ENCODE measurements at regions of chr21 and their contacts with region 1.

Region 1: GRCh38 chr21:31088315-31088714 is 50.0 kb upstream of the KRTAP19-8 start:
- DNase-seq: peak in 1 of 14 experiments; percentile 27
- ATAC-seq: no peak
- H3K4me3 ChIP-seq: no peak overlapping the region
- H3K4me3 Mint-ChIP-seq: no peak overlapping the region
- H3K27ac ChIP-seq: no peak overlapping the region
- H3K27ac Mint-ChIP-seq: no peak overlapping the region
- H3K4me1 ChIP-seq: peaks cover 7% of the 10 kb centered on the region
- H3K4me1 Mint-ChIP-seq: peaks cover 12% of the 10 kb centered on the region
- H3K27me3 ChIP-seq: no peaks in the 10 kb centered on the region
- H3K27me3 Mint-ChIP-seq: no peaks in the 10 kb centered on the region
- CTCF ChIP-seq: no peak

Region 2: DNA sequence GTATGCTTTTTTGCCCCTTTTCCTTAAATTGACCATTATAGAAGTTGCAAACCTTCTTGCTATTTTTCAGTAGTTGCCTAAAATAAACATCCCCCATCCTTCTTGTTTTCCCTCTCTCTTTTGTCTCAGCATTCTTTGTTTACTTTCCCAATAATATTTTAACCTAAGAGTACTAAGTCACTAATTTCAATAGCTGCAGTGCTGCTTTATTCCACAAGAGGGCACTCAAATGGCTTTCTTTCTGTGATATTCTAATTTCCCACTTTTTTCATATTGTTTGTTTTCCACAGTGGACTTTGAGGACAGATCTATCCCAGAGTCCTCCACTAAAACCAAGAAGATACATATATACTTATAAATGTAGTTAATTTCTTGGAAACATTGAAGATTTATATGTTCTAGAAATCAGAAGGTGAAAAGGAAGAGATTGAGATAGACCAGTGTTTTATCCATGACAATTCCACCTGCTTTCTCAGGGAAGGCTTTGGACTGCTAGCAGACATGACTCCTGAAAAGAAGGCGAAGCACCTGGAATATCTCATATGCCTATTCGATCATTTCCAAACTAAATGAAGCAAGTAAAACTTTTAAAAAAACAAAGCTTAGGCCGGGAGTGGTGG is 1043.8 kb before region 1 on chr21:
- CTCF ChIA-PET with region 1: interaction called, 4 read pairs
- POLR2A ChIA-PET with region 1: no interaction called
- intact Hi-C with region 1: loop called in 1 of 2 experiments (anchors 2 kb)
- DNase-seq: peak in 3 of 14 experiments; percentile 5 to 24 (median 7)
- ATAC-seq: no peak
- H3K4me3 ChIP-seq: no peak overlapping the region
- H3K4me3 Mint-ChIP-seq: no peak overlapping the region
- H3K27ac ChIP-seq: no peak overlapping the region
- H3K27ac Mint-ChIP-seq: no peak overlapping the region
- H3K4me1 ChIP-seq: no peaks in the 10 kb centered on the region
- H3K4me1 Mint-ChIP-seq: no peaks in the 10 kb centered on the region
- H3K27me3 ChIP-seq: peaks cover 0 to under 1% of the 10 kb centered on the region in 2 experiments
- H3K27me3 Mint-ChIP-seq: peaks cover 8% of the 10 kb centered on the region
- CTCF ChIP-seq: peak; percentile 94

Region 3: GRCh38 chr21:30340441-30341241 is 747.7 kb before region 1 on chr21:
- CTCF ChIA-PET with region 1: interaction called, 5 read pairs
- POLR2A ChIA-PET with region 1: no interaction called
- intact Hi-C with region 1: loop called in 1 of 2 experiments (anchors 1 kb)
- DNase-seq: peak in 9 of 14 experiments; percentile 0 to 42 (median 18)
- ATAC-seq: no peak
- H3K4me3 ChIP-seq: no peak overlapping the region
- H3K4me3 Mint-ChIP-seq: no peak overlapping the region
- H3K27ac ChIP-seq: no peak overlapping the region
- H3K27ac Mint-ChIP-seq: no peak overlapping the region
- H3K4me1 ChIP-seq: no peaks in the 10 kb centered on the region
- H3K4me1 Mint-ChIP-seq: no peaks in the 10 kb centered on the region
- H3K27me3 ChIP-seq: no peaks in the 10 kb centered on the region
- H3K27me3 Mint-ChIP-seq: peaks cover 9% of the 10 kb centered on the region
- CTCF ChIP-seq: peak; percentile 63

Region 4: GRCh38 chr21:30502041-30502440 is 586.3 kb before region 1 on chr21 and contains the start of gene KRTAP19-5:
- CTCF ChIA-PET with region 1: no interaction called
- POLR2A ChIA-PET with region 1: no interaction called
- intact Hi-C with region 1: loop called in 1 of 2 experiments (anchors 10 kb)
- DNase-seq: no peak
- ATAC-seq: no peak
- H3K4me3 ChIP-seq: no peak within 1 kb of the TSS
- H3K4me3 Mint-ChIP-seq: no peak within 1 kb of the TSS
- H3K27ac ChIP-seq: no peak within 1 kb of the TSS
- H3K27ac Mint-ChIP-seq: no peak within 1 kb of the TSS
- H3K4me1 ChIP-seq: no peaks in the 10 kb centered on the region
- H3K4me1 Mint-ChIP-seq: no peaks in the 10 kb centered on the region
- H3K27me3 ChIP-seq: no peaks in the 10 kb centered on the region
- H3K27me3 Mint-ChIP-seq: peaks cover 5% of the 10 kb centered on the region
- CTCF ChIP-seq: no peak
- total RNA-seq, gene KRTAP19-5: not detected

Region 5: GRCh38 chr21:30831194-30831765 is 257.0 kb before region 1 on chr21:
- CTCF ChIA-PET with region 1: no interaction called
- POLR2A ChIA-PET with region 1: no interaction called
- intact Hi-C with region 1: loop called (anchors 1 to 2 kb)
- DNase-seq: peak in 8 of 14 experiments; percentile 2 to 61 (median 24)
- ATAC-seq: no peak
- H3K4me3 ChIP-seq: no peak overlapping the region
- H3K4me3 Mint-ChIP-seq: no peak overlapping the region
- H3K27ac ChIP-seq: no peak overlapping the region
- H3K27ac Mint-ChIP-seq: no peak overlapping the region
- H3K4me1 ChIP-seq: no peaks in the 10 kb centered on the region
- H3K4me1 Mint-ChIP-seq: no peaks in the 10 kb centered on the region
- H3K27me3 ChIP-seq: peaks cover 3 to 6% of the 10 kb centered on the region in 2 experiments
- H3K27me3 Mint-ChIP-seq: peaks cover 18% of the 10 kb centered on the region
- CTCF ChIP-seq: peak; percentile 36

Region 6: GRCh38 chr21:31142600-31142999 is 54.3 kb after region 1 on chr21:
- CTCF ChIA-PET with region 1: no interaction called
- POLR2A ChIA-PET with region 1: no interaction called
- intact Hi-C with region 1: no loop called
- DNase-seq: peak in 13 of 14 experiments; percentile 23 to 71 (median 48)
- ATAC-seq: peak; percentile 97
- H3K4me3 ChIP-seq: no peak overlapping the region
- H3K4me3 Mint-ChIP-seq: no peak overlapping the region
- H3K27ac ChIP-seq: no peak overlapping the region
- H3K27ac Mint-ChIP-seq: no peak overlapping the region
- H3K4me1 ChIP-seq: peaks cover 18% of the 10 kb centered on the region
- H3K4me1 Mint-ChIP-seq: peaks cover 50% of the 10 kb centered on the region
- H3K27me3 ChIP-seq: no peaks in the 10 kb centered on the region
- H3K27me3 Mint-ChIP-seq: no peaks in the 10 kb centered on the region
- CTCF ChIP-seq: peak; percentile 52